ENCODE measurements at regions of chr17 and their contacts with region 1.

Region 1: DNA sequence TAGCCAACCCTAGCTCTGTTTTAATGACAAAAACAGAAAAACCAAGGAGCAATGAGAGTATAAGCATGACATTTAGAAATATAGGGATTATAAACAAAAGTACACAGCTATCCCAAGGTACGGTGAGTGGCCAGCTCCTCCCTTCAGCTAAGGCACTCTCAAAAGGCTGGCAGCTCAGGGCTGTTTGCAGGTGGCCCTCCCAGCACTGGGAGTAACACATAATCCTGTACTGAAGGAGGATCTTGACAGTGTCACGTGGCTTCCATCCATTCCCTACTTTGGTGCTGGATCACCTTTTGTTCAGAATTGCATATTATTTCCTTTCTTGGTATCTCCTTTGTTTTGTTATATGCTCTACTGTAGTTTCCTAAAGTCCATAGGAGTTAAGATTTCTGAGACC is 500.8 kb downstream of the KCNJ18 start:
- DNase-seq: no peak
- ATAC-seq: no peak
- H3K4me3 ChIP-seq: no peak overlapping the region
- H3K4me3 Mint-ChIP-seq: no peak overlapping the region
- H3K27ac ChIP-seq: no peak overlapping the region
- H3K27ac Mint-ChIP-seq: no peak overlapping the region
- H3K4me1 ChIP-seq: no peaks in the 10 kb centered on the region
- H3K4me1 Mint-ChIP-seq: no peaks in the 10 kb centered on the region
- H3K27me3 ChIP-seq: no peaks in the 10 kb centered on the region
- H3K27me3 Mint-ChIP-seq: no peaks in the 10 kb centered on the region
- CTCF ChIP-seq: no peak

Region 2: DNA sequence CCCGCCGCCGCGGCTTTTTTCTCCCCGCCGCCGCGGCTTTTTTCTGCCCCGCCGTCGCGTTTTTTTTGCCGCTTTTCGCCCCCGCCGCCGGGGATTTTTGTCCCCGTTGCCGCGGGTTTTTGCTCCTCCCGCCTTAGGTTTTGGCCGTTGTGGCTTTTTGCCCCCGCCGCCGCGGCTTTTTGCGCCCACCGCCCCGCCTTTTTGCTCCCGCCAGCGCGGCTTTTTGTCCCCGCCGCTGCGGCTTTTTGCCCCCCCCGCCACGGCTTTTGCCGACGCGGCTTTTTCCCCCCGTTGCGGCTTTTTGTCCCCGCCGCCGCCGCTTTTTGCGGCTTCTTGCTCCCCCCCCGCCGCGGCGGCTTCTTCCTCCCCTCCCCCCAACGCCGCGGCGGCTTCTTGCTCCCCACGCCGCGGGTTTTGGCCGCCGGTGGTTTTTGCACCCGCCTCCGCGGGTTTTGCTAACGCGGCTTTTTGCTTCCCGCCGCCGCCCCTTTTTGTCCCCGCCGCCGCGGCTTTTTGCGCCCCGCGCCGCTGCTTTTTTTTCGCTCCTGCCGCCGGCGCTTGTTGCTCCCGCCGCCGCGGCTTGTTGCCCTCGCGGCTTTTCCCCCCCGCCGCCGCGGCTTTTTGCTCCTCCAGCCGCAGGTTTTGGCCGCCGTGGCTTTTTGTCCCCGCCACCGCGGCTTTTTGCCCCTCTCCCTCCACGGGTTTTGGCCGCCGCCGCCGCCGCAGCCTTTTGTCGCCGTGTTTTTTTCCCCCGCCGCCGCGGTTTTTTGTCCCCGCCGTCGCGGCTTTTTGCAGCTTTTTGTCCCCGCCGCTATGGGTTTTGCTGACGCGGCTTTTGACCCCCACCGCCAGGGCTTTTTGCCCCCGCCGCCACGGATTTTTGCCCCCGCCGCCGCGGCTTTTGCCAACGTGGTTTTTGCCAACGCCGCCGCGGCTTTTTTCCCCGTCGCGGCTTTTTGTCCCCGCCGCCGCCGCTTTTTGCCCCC is 350.5 kb before region 1 on chr17:
- CTCF ChIA-PET with region 1: no interaction called
- POLR2A ChIA-PET with region 1: no interaction called
- intact Hi-C with region 1: no loop called
- DNase-seq: no peak
- ATAC-seq: no peak
- H3K4me3 ChIP-seq: no peak overlapping the region
- H3K4me3 Mint-ChIP-seq: no peak overlapping the region
- H3K27ac ChIP-seq: no peak overlapping the region
- H3K27ac Mint-ChIP-seq: no peak overlapping the region
- H3K4me1 ChIP-seq: no peaks in the 10 kb centered on the region
- H3K4me1 Mint-ChIP-seq: no peaks in the 10 kb centered on the region
- H3K27me3 ChIP-seq: peaks cover 0 to 6% of the 10 kb centered on the region in 2 experiments
- H3K27me3 Mint-ChIP-seq: peaks cover 44% of the 10 kb centered on the region
- CTCF ChIP-seq: no peak

Region 3: DNA sequence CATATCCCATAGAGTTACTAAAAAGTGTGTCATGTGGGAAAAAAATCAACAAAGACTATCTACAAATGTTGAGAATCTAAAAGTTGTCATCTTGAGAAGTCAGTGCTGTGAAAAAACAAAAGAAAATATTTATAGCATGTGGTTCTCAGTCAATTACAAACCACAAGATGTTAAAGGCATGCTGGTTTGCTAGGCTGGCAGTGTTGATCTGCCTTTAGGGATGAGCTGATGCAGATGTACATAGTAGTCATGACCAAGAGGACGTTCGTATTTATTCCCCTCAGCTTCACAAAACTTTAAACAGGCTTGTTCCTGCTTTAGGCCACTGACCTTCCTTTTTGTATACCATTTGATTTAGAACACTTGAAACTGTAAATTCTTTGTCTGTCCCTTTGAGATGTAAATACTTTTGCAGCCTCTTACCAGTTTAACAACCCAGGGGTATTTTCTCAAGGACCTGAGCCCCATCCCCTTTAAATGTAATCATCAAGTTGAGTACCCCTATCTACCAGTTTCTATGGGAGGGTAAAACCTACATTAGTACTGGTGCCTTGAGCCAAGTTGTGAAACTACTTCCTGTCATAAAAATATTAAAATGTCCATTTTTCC is 54.1 kb before region 1 on chr17:
- CTCF ChIA-PET with region 1: no interaction called
- POLR2A ChIA-PET with region 1: no interaction called
- intact Hi-C with region 1: loop called in 1 of 2 experiments (anchors 10 kb)
- DNase-seq: no peak
- ATAC-seq: no peak
- H3K4me3 ChIP-seq: no peak overlapping the region
- H3K4me3 Mint-ChIP-seq: no peak overlapping the region
- H3K27ac ChIP-seq: no peak overlapping the region
- H3K27ac Mint-ChIP-seq: no peak overlapping the region
- H3K4me1 ChIP-seq: no peaks in the 10 kb centered on the region
- H3K4me1 Mint-ChIP-seq: no peaks in the 10 kb centered on the region
- H3K27me3 ChIP-seq: no peaks in the 10 kb centered on the region
- H3K27me3 Mint-ChIP-seq: no peaks in the 10 kb centered on the region
- CTCF ChIP-seq: no peak

Region 4: DNA sequence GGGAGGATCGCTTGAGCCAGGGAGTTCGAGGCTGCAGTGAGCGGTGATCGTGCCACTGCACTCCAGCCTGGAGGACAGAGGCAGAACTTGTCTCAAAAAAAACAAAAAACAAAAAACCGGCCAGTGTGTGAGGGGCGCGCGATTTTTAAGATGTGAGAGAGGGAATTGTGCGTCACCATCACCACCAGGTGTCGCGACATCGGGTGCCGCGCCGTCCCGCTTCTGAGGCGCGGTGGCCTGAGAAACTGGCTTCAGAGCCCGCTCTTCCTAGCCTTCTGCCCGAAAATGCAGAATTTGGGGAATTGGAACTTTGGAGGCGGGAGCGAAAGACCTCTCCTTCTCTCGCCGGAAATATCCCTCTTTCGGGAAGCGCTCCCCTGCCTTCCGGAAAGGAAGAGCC is 24.0 kb after region 1 on chr17:
- CTCF ChIA-PET with region 1: no interaction called
- POLR2A ChIA-PET with region 1: no interaction called
- intact Hi-C with region 1: no loop called
- DNase-seq: no peak
- ATAC-seq: no peak
- H3K4me3 ChIP-seq: no peak overlapping the region
- H3K4me3 Mint-ChIP-seq: no peak overlapping the region
- H3K27ac ChIP-seq: no peak overlapping the region
- H3K27ac Mint-ChIP-seq: no peak overlapping the region
- H3K4me1 ChIP-seq: no peaks in the 10 kb centered on the region
- H3K4me1 Mint-ChIP-seq: no peaks in the 10 kb centered on the region
- H3K27me3 ChIP-seq: no peaks in the 10 kb centered on the region
- H3K27me3 Mint-ChIP-seq: no peaks in the 10 kb centered on the region
- CTCF ChIP-seq: no peak